ENCODE measurements at regions of chr9 and their contacts with region 1.

Region 1: DNA sequence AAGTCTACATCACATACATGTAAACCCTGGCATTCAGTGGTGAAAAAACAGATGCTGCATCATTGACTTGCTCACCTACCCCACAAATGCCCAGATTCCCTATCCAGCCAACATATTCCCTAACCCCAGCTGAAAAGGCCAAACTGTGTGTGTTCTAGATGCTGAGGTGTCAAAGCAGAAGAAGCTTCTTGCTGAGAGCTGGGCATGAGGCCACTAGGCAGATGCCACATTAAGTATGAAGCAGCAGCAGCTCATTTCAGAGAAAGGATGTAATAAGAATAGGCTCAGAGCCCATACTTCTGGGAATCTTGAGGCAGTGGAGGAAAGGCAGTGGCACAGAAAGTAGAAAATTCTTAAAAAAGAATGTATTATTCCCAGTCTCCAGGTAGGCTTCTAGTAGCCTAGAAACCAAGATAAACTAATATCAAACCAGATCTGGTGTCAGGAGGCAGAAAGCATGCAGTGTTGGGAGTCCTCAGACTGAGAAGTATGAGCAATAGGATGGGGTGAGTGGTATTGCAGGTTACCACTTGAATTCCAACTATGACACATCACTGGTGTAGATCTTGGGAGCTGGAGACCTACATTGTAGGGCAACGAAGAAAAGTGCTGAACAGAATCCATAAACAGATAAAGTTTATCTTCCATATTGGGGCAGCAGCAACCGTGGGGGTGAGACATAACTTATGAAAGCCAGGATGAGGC is 71.9 kb upstream of the GRHPR start:
- DNase-seq: no peak
- H3K4me3 ChIP-seq: no peak overlapping the region
- H3K4me3 Mint-ChIP-seq: no peak overlapping the region
- H3K27ac Mint-ChIP-seq: no peak overlapping the region
- H3K4me1 ChIP-seq: no peaks in the 10 kb centered on the region
- H3K4me1 Mint-ChIP-seq: no peaks in the 10 kb centered on the region
- H3K27me3 ChIP-seq: no peaks in the 10 kb centered on the region
- H3K27me3 Mint-ChIP-seq: no peaks in the 10 kb centered on the region
- CTCF ChIP-seq: no peak

Region 2: DNA sequence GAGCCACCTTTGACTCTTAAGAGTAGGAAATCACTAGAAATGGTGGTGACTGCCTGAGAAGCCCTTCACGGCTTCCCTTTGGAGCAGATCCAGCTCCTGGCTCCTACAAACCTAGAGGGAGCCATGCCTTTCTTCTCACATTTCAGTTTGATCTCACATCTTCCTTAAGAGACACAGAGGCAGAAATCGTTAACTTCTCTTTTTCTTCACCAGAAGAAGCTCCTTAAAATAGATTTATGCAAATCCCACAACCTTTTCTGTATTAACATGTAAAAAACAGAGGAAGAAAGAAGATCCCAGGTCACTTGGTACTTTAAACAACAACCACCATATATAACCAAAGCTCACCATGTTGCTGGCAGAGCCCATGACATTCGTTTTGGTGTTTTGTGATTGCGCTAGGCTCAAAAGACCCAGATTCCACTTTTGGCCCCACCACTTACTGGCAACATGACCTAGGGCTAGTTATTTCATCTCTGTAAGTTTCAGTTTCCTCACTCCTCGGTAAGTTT is 346.2 kb before region 1 on chr9:
- CTCF ChIA-PET with region 1: no interaction called
- POLR2A ChIA-PET with region 1: no interaction called
- intact Hi-C with region 1: no loop called
- DNase-seq: no peak
- H3K4me3 ChIP-seq: no peak overlapping the region
- H3K4me3 Mint-ChIP-seq: no peak overlapping the region
- H3K27ac Mint-ChIP-seq: no peak overlapping the region
- H3K4me1 ChIP-seq: no peaks in the 10 kb centered on the region
- H3K4me1 Mint-ChIP-seq: no peaks in the 10 kb centered on the region
- H3K27me3 ChIP-seq: peaks cover 1% of the 10 kb centered on the region; the same call in 1 of the 2 replicates
- H3K27me3 Mint-ChIP-seq: peaks cover 11% of the 10 kb centered on the region
- CTCF ChIP-seq: no peak

Region 3: DNA sequence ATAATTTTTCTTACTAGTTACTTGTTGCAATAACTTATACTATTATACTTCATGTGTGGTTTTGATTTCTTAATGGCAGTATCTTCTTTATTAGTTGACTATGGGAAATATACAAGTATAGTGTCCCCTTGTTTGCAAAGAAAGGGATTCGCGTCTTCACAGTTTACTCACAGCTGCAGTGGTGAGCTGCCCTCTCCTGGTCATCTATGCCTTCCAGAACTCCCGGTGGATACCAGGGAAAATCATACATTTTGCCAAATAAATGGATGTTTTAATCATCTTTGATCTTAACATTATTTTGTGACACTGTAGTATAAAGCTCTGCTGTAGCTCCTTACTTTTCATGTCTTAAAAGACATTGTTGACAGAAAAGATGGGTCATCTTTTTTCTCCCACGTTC is 88.2 kb before region 1 on chr9:
- CTCF ChIA-PET with region 1: no interaction called
- POLR2A ChIA-PET with region 1: no interaction called
- intact Hi-C with region 1: no loop called
- DNase-seq: peak in 1 of 2 experiments; percentile 21
- H3K4me3 ChIP-seq: no peak overlapping the region
- H3K4me3 Mint-ChIP-seq: no peak overlapping the region
- H3K27ac Mint-ChIP-seq: no peak overlapping the region
- H3K4me1 ChIP-seq: no peaks in the 10 kb centered on the region
- H3K4me1 Mint-ChIP-seq: no peaks in the 10 kb centered on the region
- H3K27me3 ChIP-seq: no peaks in the 10 kb centered on the region
- H3K27me3 Mint-ChIP-seq: no peaks in the 10 kb centered on the region
- CTCF ChIP-seq: peak; percentile 42 to 61

Region 4: GRCh38 chr9:37364751-37365360 is 14.2 kb after region 1 on chr9:
- CTCF ChIA-PET with region 1: no interaction called
- POLR2A ChIA-PET with region 1: no interaction called
- intact Hi-C with region 1: loop called (anchors 2 kb)
- DNase-seq: no peak
- H3K4me3 ChIP-seq: no peak overlapping the region
- H3K4me3 Mint-ChIP-seq: no peak overlapping the region
- H3K27ac Mint-ChIP-seq: no peak overlapping the region
- H3K4me1 ChIP-seq: peaks cover 8% of the 10 kb centered on the region
- H3K4me1 Mint-ChIP-seq: peaks cover 10% of the 10 kb centered on the region
- H3K27me3 ChIP-seq: no peaks in the 10 kb centered on the region
- H3K27me3 Mint-ChIP-seq: no peaks in the 10 kb centered on the region
- CTCF ChIP-seq: no peak

Measured in Caco-2 (cell line).